Ascending aorta (tissue), 2 donors: ENCODE measurements at regions of chr14 and their contacts with region 1.

Region 1: GRCh38 chr14:90758028-90758889 is 58.0 kb downstream of the TTC7B start:
- DNase-seq: peak; percentile 62 to 94
- H3K4me3 ChIP-seq: peak overlapping the region; percentile 54 to 60
- H3K27ac ChIP-seq: peak overlapping the region; percentile 93 to 94
- H3K4me1 ChIP-seq: peaks cover 3 to 10% of the 10 kb centered on the region in 2 donors
- H3K27me3 ChIP-seq: no peaks in the 10 kb centered on the region
- CTCF ChIP-seq: peak; percentile 87 to 96 (median 88)

Region 2: GRCh38 chr14:90301668-90302090 is 456.6 kb before region 1 on chr14:
- intact Hi-C with region 1: loop called (anchors 2 kb)
- DNase-seq: no peak
- H3K4me3 ChIP-seq: no peak overlapping the region
- H3K27ac ChIP-seq: peak overlapping the region; percentile 37 to 40
- H3K4me1 ChIP-seq: peaks cover 0 to 14% of the 10 kb centered on the region in 2 donors
- H3K27me3 ChIP-seq: no peaks in the 10 kb centered on the region
- CTCF ChIP-seq: peak in 2 of 3 experiments; percentile 52 to 63

Region 3: GRCh38 chr14:90383075-90383730 is 375.1 kb before region 1 on chr14:
- intact Hi-C with region 1: loop called (anchors 1 kb)
- DNase-seq: peak; percentile 97 to 100
- H3K4me3 ChIP-seq: peak overlapping the region; percentile 72 to 75
- H3K27ac ChIP-seq: peak overlapping the region; percentile 100
- H3K4me1 ChIP-seq: peaks cover 0 to 16% of the 10 kb centered on the region in 2 donors
- H3K27me3 ChIP-seq: no peaks in the 10 kb centered on the region
- CTCF ChIP-seq: peak in 1 of 3 experiments; percentile 9

Region 4: GRCh38 chr14:90419200-90419599 is 339.1 kb before region 1 on chr14:
- intact Hi-C with region 1: loop called (anchors 2 kb)
- DNase-seq: peak; percentile 68 to 96
- H3K4me3 ChIP-seq: no peak overlapping the region
- H3K27ac ChIP-seq: peak overlapping the region; percentile 52 to 79
- H3K4me1 ChIP-seq: peaks cover 0 to 13% of the 10 kb centered on the region in 2 donors
- H3K27me3 ChIP-seq: no peaks in the 10 kb centered on the region
- CTCF ChIP-seq: no peak

Region 5: DNA sequence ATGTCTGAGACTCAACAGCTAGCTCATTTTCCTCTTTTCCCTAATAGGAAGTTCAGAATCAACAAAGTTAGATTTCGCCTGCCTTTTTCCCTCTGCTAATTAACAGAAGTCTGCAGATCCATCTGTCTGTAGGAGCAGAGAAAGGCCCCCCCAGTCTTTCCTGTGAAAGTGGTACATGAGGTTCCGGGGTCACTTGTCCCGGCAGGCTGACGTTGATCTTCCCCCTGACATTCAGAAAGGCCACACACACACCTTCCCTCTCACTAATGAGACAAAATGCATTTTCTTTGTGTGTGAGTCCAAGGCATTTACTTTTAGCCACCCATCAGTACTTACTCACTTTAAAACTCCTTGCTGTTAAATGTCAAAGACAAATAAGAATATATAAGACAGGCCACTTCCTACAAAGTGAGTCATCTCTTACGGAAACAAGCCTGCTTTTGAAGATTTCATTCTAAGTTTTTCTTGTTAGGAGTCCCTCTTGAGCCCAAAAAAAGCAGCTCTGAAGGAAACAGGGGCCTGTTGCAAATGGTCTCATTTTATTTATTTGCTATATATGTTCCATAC is 80.7 kb before region 1 on chr14:
- intact Hi-C with region 1: loop called (anchors 5 kb)
- DNase-seq: no peak
- H3K4me3 ChIP-seq: no peak overlapping the region
- H3K27ac ChIP-seq: peak overlapping the region; percentile 77 to 92
- H3K4me1 ChIP-seq: peaks cover 8 to 20% of the 10 kb centered on the region in 2 donors
- H3K27me3 ChIP-seq: no peaks in the 10 kb centered on the region
- CTCF ChIP-seq: no peak

Region 6: GRCh38 chr14:90815822-90816700 is 57.8 kb after region 1 on chr14 and contains the start of gene TTC7B:
- intact Hi-C with region 1: loop called (anchors 2 kb)
- DNase-seq: no peak
- H3K4me3 ChIP-seq: peak within 1 kb of the TSS; percentile 93
- H3K27ac ChIP-seq: no peak within 1 kb of the TSS
- H3K4me1 ChIP-seq: peaks cover 0 to 6% of the 10 kb centered on the region in 2 donors
- H3K27me3 ChIP-seq: no peaks in the 10 kb centered on the region
- CTCF ChIP-seq: peak; percentile 24 to 45 (median 26)
- total RNA-seq, gene TTC7B: 18.5 TPM

Region 7: GRCh38 chr14:91060351-91061055 is 302.2 kb after region 1 on chr14 and contains the start of gene RPS6KA5:
- intact Hi-C with region 1: loop called (anchors 1 kb)
- DNase-seq: peak; percentile 100
- H3K4me3 ChIP-seq: peak within 1 kb of the TSS; percentile 91 to 98
- H3K27ac ChIP-seq: peak within 1 kb of the TSS; percentile 94 to 99
- H3K4me1 ChIP-seq: peaks cover 3 to 9% of the 10 kb centered on the region in 2 donors
- H3K27me3 ChIP-seq: no peaks in the 10 kb centered on the region
- CTCF ChIP-seq: peak in 2 of 3 experiments; percentile 16 to 59
- total RNA-seq, gene RPS6KA5: 0.21 TPM